OCI-LY7 (cell line): ENCODE measurements at regions of chr3 and their contacts with region 1.

Region 1: DNA sequence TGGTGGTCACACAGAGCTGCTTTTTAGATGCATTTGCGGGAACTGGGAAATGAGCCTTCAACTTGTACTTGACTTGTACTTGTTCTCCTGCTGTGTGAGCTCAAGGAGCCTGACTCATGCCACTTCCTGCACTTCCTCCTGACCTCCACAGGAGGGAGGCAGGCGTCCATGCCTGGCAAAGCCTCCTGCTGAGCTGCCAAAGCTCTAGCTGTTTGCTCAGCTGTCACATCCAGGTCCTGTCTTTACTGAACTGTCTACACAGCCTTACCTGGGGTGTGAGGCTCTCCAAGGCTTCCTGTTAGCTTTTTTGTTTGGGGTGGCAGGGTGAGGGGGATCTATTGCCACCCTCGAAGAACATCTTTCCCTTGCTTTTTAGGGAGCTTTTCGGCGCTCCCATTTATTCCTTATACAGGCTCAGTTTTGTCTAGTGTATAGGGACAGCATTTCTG is 6.4 kb downstream of the THPO start:
- DNase-seq: peak; percentile 81
- H3K4me3 ChIP-seq: no peak overlapping the region
- H3K27ac ChIP-seq: no peak overlapping the region
- H3K4me1 ChIP-seq: peaks cover 6% of the 10 kb centered on the region
- CTCF ChIP-seq: peak; percentile 87

Region 2: GRCh38 chr3:184513276-184514170 is 141.9 kb after region 1 on chr3:
- CTCF ChIA-PET with region 1: interaction called, 9 read pairs
- POLR2A ChIA-PET with region 1: no interaction called
- intact Hi-C with region 1: loop called (anchors 2 kb)
- DNase-seq: peak; percentile 65
- H3K4me3 ChIP-seq: no peak overlapping the region
- H3K27ac ChIP-seq: no peak overlapping the region
- H3K4me1 ChIP-seq: no peaks in the 10 kb centered on the region
- CTCF ChIP-seq: peak; percentile 75

Region 3: GRCh38 chr3:184543843-184544512 is 172.4 kb after region 1 on chr3:
- CTCF ChIA-PET with region 1: interaction called, 5 read pairs
- POLR2A ChIA-PET with region 1: interaction called, 3 read pairs
- intact Hi-C with region 1: loop called (anchors 2 kb)
- DNase-seq: peak; percentile 73
- H3K4me3 ChIP-seq: no peak overlapping the region
- H3K27ac ChIP-seq: no peak overlapping the region
- H3K4me1 ChIP-seq: no peaks in the 10 kb centered on the region
- CTCF ChIP-seq: peak; percentile 85